IMR-90 (cell line): ENCODE measurements at regions of chr11 and their contacts with region 1.

Region 1: GRCh38 chr11:14454861-14455632 is 44.6 kb downstream of the COPB1 start:
- DNase-seq: peak; percentile 39
- ATAC-seq: peak; percentile 36; the same call in 1 of the 2 replicates
- H3K4me3 ChIP-seq: no peak overlapping the region
- H3K27ac ChIP-seq: no peak overlapping the region
- H3K4me1 ChIP-seq: peaks cover 1% of the 10 kb centered on the region
- H3K27me3 ChIP-seq: no peaks in the 10 kb centered on the region
- CTCF ChIP-seq: peak; percentile 76
- POLR2A ChIP-seq: no peak
- RAD21 ChIP-seq: peak; percentile 74

Region 2: GRCh38 chr11:14300661-14301304 is 154.3 kb before region 1 on chr11:
- CTCF ChIA-PET with region 1: interaction called, 27 read pairs
- POLR2A ChIA-PET with region 1: no interaction called
- dilution Hi-C with region 1: loop called (anchors 25 kb)
- in situ Hi-C with region 1: loop called (anchors 5 kb)
- intact Hi-C with region 1: loop called (anchors 1 kb)
- DNase-seq: peak; percentile 74
- ATAC-seq: peak; percentile 90
- H3K4me3 ChIP-seq: no peak overlapping the region
- H3K27ac ChIP-seq: 0 out of 2 replicates have a peak overlapping the region, but pooled peaks have one; percentile 4
- H3K4me1 ChIP-seq: peaks cover 5% of the 10 kb centered on the region
- H3K27me3 ChIP-seq: no peaks in the 10 kb centered on the region
- CTCF ChIP-seq: peak; percentile 87
- POLR2A ChIP-seq: 0 out of 2 replicates have a peak, but pooled peaks have one; percentile 25
- RAD21 ChIP-seq: peak; percentile 95

Region 3: GRCh38 chr11:14335712-14336111 is 119.3 kb before region 1 on chr11:
- CTCF ChIA-PET with region 1: interaction called, 10 read pairs
- POLR2A ChIA-PET with region 1: no interaction called
- dilution Hi-C with region 1: no loop called
- in situ Hi-C with region 1: no loop called
- intact Hi-C with region 1: no loop called
- DNase-seq: no peak
- ATAC-seq: no peak
- H3K4me3 ChIP-seq: no peak overlapping the region
- H3K27ac ChIP-seq: no peak overlapping the region
- H3K4me1 ChIP-seq: peaks cover 5% of the 10 kb centered on the region
- H3K27me3 ChIP-seq: no peaks in the 10 kb centered on the region
- CTCF ChIP-seq: no peak
- POLR2A ChIP-seq: no peak
- RAD21 ChIP-seq: no peak

Region 4: GRCh38 chr11:14358729-14359439 is 96.2 kb before region 1 on chr11 and contains the start of gene RRAS2:
- CTCF ChIA-PET with region 1: interaction called, 3 read pairs
- POLR2A ChIA-PET with region 1: no interaction called
- dilution Hi-C with region 1: no loop called
- in situ Hi-C with region 1: no loop called
- intact Hi-C with region 1: loop called (anchors 2 kb)
- DNase-seq: peak; percentile 65
- ATAC-seq: peak; percentile 90
- H3K4me3 ChIP-seq: peak within 1 kb of the TSS; percentile 73
- H3K27ac ChIP-seq: peak within 1 kb of the TSS; percentile 80
- H3K4me1 ChIP-seq: peaks cover 2% of the 10 kb centered on the region; the same call in 1 of the 2 replicates
- H3K27me3 ChIP-seq: no peaks in the 10 kb centered on the region
- CTCF ChIP-seq: 0 out of 2 replicates have a peak, but pooled peaks have one; percentile 11
- POLR2A ChIP-seq: peak; percentile 87
- RAD21 ChIP-seq: no peak
- total RNA-seq, gene RRAS2: 106 and 155 TPM in 2 replicates

Region 5: DNA sequence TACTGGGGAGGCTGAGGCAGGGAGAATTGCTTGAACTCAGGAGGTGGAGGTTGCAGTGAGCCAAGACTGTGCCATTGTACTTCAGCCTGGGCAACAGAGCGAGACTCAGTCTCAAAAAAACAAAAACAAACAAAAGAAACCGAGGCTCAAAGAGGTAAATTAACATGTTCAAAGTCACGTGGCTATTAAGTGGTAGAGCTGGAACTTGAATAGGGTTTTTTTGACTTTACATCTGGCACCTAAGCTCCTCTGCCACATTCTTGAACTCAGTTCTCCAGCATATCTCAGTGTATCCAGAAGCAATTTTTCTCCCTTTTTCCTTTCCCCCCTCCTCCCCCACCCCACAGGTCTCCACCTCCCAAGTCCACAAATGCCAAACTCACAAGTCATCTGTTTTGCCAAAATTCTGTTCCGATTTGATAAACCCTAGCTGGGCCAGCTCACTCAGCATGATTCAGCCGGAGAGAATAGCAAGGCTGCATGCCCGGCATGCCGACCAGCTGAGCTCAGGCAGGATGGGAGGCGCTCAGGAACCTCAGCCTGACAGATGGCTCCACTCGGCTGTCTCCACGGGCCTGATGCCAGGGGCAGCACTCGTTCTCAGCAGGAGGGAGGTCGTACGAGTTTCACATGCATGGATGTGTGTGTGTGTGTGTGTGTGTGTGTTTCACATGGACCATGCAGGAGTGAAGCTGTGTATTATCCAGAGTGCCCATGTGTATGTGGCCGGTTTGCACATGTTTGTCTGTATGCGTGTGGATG is 32.8 kb before region 1 on chr11:
- CTCF ChIA-PET with region 1: interaction called, 10 read pairs
- POLR2A ChIA-PET with region 1: no interaction called
- dilution Hi-C with region 1: no loop called
- in situ Hi-C with region 1: no loop called
- intact Hi-C with region 1: no loop called
- DNase-seq: peak; percentile 100
- ATAC-seq: peak; percentile 89
- H3K4me3 ChIP-seq: no peak overlapping the region
- H3K27ac ChIP-seq: peak overlapping the region; percentile 67
- H3K4me1 ChIP-seq: peaks cover 22% of the 10 kb centered on the region
- H3K27me3 ChIP-seq: no peaks in the 10 kb centered on the region
- CTCF ChIP-seq: no peak
- POLR2A ChIP-seq: no peak
- RAD21 ChIP-seq: 0 out of 2 replicates have a peak, but pooled peaks have one; percentile 17

Region 6: GRCh38 chr11:14519917-14520746 is 65.1 kb after region 1 on chr11 and contains the start of gene PSMA1:
- CTCF ChIA-PET with region 1: no interaction called
- POLR2A ChIA-PET with region 1: no interaction called
- dilution Hi-C with region 1: no loop called
- in situ Hi-C with region 1: no loop called
- intact Hi-C with region 1: no loop called
- DNase-seq: peak; percentile 94
- ATAC-seq: peak; percentile 98
- H3K4me3 ChIP-seq: peak within 1 kb of the TSS; percentile 81
- H3K27ac ChIP-seq: peak within 1 kb of the TSS; percentile 95
- H3K4me1 ChIP-seq: no peaks in the 10 kb centered on the region; the same call in 1 of the 2 replicates
- H3K27me3 ChIP-seq: no peaks in the 10 kb centered on the region
- CTCF ChIP-seq: no peak
- POLR2A ChIP-seq: peak; percentile 91
- RAD21 ChIP-seq: no peak
- total RNA-seq, gene PSMA1: 194 and 219 TPM in 2 replicates